ENCODE measurements at regions of chr6 and their contacts with region 1.

Region 1: DNA sequence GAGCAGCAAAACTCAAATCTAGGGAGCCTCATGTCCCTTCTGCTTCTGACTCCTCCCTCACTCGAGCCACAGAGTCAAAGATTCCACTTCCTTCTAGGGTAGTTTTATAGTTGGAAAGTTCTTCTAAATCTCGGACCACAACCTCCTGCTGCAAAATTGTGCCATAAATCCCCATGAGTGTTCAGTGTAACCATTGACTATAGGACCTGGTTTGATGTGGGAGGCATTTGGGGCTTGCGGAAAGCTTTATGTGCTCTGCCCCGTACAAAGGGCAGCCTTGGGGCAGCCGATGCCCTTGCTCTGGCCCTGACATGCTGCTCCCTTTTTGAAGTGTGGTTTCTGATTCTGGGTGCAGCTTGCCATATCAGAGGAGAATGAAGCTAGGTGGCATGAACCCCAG is 43.6 kb upstream of the IER3 start:
- DNase-seq: peak; percentile 23
- H3K4me3 Mint-ChIP-seq: peak overlapping the region; percentile 68
- H3K27ac Mint-ChIP-seq: peak overlapping the region; percentile 96
- H3K4me1 Mint-ChIP-seq: peaks cover 60% of the 10 kb centered on the region
- H3K27me3 Mint-ChIP-seq: no peaks in the 10 kb centered on the region

Region 2: DNA sequence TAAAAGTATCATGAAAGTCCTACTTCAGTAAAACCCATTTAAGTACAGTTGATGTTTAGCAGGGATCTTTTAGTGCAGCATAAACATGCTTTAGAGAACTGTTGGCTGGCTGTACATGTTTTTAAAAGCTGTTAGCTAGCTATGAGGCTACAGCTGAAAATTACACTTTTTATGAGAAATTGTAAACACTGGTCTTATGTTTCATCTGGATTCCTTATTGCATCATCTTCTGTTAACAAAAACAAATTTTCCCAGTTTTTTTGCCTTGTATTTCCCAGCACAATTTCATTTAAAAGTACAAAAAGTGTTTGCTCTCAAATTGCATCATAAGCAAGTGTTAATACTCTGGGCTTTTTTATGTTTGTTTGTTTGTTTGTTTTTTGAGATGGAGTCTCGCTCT is 317.0 kb before region 1 on chr6:
- intact Hi-C with region 1: no loop called
- DNase-seq: no peak
- H3K4me3 Mint-ChIP-seq: no peak overlapping the region
- H3K27ac Mint-ChIP-seq: no peak overlapping the region
- H3K4me1 Mint-ChIP-seq: peaks cover 12% of the 10 kb centered on the region
- H3K27me3 Mint-ChIP-seq: peaks cover 67% of the 10 kb centered on the region

Region 3: GRCh38 chr6:30656513-30656912 is 131.4 kb before region 1 on chr6:
- intact Hi-C with region 1: no loop called
- DNase-seq: no peak
- H3K4me3 Mint-ChIP-seq: no peak overlapping the region
- H3K27ac Mint-ChIP-seq: no peak overlapping the region
- H3K4me1 Mint-ChIP-seq: peaks cover 10% of the 10 kb centered on the region
- H3K27me3 Mint-ChIP-seq: no peaks in the 10 kb centered on the region

Region 4: DNA sequence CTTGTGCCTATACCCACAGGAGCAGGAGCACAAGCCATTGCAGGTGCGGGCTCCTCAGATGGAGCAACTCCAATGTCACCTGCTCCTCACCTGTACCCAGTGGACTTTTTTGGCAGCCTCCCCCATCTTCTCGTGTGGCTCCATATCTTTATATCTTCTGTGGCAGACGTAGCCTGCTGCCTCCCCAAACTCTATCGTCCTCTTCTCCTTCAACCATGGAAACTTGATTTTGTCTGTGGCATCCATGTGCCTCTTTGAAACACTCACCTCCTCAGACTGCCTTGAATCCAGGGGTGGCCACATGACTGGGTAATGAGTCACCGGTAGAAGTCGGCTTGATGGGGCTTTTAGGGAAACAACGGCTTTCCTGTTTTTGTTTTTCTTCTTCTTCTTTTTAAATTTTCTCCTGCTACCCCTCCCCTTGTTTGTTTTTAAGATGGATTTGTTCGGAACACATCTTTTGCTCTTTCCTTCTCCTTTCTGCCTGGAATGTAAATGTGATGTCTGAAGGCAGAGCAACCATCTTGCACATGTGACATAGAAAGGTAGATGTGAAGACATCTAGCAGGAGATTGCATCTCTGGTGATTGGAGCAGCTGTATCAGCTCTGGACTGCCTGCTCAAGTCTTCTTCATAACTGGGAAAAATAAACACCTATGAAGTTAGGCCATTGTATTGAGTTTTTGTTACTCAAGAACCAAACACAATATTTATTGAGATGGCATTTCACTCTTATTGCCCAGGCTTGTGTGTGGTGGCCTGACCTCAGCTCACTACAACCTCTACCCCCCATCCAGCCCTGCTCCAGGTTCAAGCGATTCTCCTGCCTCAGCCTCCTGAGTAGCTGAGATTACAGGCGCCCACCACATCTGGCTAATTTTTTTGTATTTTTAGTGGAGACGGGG is 26.4 kb after region 1 on chr6:
- intact Hi-C with region 1: loop called (anchors 1 kb)
- DNase-seq: peak; percentile 47
- H3K4me3 Mint-ChIP-seq: peak overlapping the region; percentile 72
- H3K27ac Mint-ChIP-seq: peak overlapping the region; percentile 99
- H3K4me1 Mint-ChIP-seq: peaks cover 86% of the 10 kb centered on the region
- H3K27me3 Mint-ChIP-seq: peaks cover 1% of the 10 kb centered on the region

Region 5: DNA sequence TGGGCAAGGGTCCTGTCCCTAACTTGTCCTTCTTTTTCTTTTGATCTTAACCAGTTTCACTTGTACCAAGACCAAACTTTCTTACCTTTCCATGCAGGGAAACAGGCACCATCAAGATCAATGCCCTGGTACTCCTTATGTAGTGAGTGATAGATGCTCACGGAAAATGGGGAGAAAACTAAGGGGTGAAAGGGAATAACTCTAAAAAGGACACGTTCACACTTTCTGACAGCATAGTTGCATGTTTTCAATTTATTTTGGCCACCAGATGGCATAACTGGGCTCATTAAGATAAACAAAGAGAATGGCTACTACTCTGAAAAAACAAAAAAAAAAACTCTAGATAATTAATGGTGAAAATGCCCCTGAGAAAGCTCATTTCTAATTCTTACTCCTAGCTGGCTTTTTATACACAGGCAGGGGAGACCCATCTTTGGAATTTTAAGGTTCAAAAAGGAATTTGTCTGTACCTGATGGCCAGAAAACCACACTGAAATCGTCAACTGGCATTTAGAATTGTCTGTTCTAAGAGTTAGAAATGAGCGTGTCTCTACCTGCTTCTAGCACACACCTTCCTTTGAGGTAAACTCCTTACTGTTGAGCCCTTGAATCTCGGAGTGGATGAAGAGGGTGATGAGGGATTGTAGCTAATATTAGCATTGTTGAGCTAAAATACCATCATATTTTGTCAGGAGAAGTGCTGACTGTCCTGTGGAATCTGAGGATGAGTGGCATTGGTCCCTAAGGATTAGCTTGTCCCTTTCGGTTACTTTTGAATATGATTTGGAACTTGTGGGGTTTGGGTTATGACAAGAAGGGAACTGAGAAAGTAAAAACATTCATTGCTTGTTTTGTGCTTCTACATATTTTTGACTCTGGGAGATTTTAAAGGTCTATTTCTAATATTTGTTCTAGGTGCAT is 34.2 kb after region 1 on chr6:
- intact Hi-C with region 1: loop called (anchors 5 kb)
- DNase-seq: no peak
- H3K4me3 Mint-ChIP-seq: no peak overlapping the region
- H3K27ac Mint-ChIP-seq: peak overlapping the region; percentile 29
- H3K4me1 Mint-ChIP-seq: peaks cover 71% of the 10 kb centered on the region
- H3K27me3 Mint-ChIP-seq: no peaks in the 10 kb centered on the region

Measured in activated T-helper 1 cell treated with anti-CD3 and anti-CD28 coated beads, Interleukin-12 subunit alpha, Interleukin-12 subunit beta, Interleukin-2, Interleukin-4 antibody, amounts not matched to agents 30 ng/mL and 10 ng/mL and 1 ng/mL, durations not matched to agents 14 hours and 24 hours and 36 hours (primary cell).